ENCODE measurements at regions of chr17 and their contacts with region 1.

Region 1: DNA sequence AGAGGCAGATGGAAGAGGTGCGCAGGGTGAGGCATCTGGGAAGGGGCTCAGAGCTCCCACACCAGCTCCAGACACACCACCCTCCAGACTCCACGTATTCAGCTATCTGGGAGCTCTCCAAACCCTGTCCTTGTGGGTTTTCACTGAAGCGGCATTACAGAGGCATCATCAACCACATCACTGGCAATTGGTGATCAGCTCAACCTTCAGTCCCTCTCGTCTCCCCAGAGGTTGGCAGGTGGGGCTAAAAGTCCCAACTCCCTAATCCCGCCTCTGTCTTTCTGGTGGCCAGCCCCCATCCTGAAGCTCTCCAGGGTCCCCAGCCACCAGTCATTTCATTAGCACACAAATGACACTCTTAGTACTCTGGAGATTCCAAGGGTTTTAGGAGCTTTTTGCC is 123.9 kb downstream of the KCNJ12 start:
- DNase-seq: no peak
- ATAC-seq: no peak
- H3K4me3 ChIP-seq: no peak overlapping the region
- H3K27ac ChIP-seq: no peak overlapping the region
- H3K4me1 ChIP-seq: no peaks in the 10 kb centered on the region
- H3K27me3 ChIP-seq: no peaks in the 10 kb centered on the region
- CTCF ChIP-seq: no peak

Region 2: GRCh38 chr17:21463779-21464407 is 36.2 kb before region 1 on chr17:
- intact Hi-C with region 1: loop called in 1 of 2 experiments (anchors 5 kb)
- DNase-seq: no peak
- ATAC-seq: peak in 1 of 4 donors; percentile 21
- H3K4me3 ChIP-seq: peak overlapping the region; percentile 28
- H3K27ac ChIP-seq: no peak overlapping the region
- H3K4me1 ChIP-seq: no peaks in the 10 kb centered on the region
- H3K27me3 ChIP-seq: peaks cover 0 to 4% (median 0%) of the 10 kb centered on the region in 3 donors
- CTCF ChIP-seq: no peak

Region 3: DNA sequence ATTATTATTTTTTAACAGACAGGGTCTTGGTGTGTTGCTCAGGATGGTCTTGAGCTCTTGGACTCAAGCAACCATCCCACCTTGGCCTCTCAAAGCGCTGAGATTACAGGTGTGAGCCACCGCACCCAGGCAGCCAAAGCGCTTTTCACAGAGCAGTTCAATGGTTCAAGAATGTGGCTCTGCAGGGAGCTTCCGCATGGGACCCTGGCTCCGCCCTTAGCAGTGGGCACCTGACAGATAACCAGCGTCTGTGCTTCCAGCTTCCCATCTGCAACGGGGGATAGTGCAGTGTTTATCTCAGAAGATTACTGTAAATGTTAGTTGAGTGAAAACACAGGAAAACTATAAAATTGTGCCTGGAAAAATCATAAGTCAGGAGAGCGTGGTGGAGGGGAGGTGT is 24.5 kb before region 1 on chr17:
- intact Hi-C with region 1: no loop called
- DNase-seq: no peak
- ATAC-seq: no peak
- H3K4me3 ChIP-seq: no peak overlapping the region
- H3K27ac ChIP-seq: no peak overlapping the region
- H3K4me1 ChIP-seq: no peaks in the 10 kb centered on the region
- H3K27me3 ChIP-seq: no peaks in the 10 kb centered on the region
- CTCF ChIP-seq: no peak

Measured in psoas muscle (tissue), 8 donors.